Heart left ventricle (tissue), 16 donors: ENCODE measurements at regions of chr12 and their contacts with region 1.

Region 1: GRCh38 chr12:95351748-95352147 is 122.2 kb upstream of the METAP2 start:
- DNase-seq: peak in 4 of 5 donors; percentile 30 to 56 (median 39)
- ATAC-seq: peak; percentile 81 to 88 (median 87)
- H3K4me3 ChIP-seq: no peak overlapping the region
- H3K27ac ChIP-seq: no peak overlapping the region
- H3K4me1 ChIP-seq: no peaks in the 10 kb centered on the region
- H3K27me3 ChIP-seq: no peaks in the 10 kb centered on the region
- CTCF ChIP-seq: peak in 8 of 12 donors; percentile 12 to 41 (median 29)
- POLR2A ChIP-seq: no peak

Region 2: GRCh38 chr12:95265765-95266164 is 86.0 kb before region 1 on chr12:
- intact Hi-C with region 1: no loop called
- DNase-seq: no peak
- ATAC-seq: no peak
- H3K4me3 ChIP-seq: no peak overlapping the region
- H3K27ac ChIP-seq: peak overlapping the region in 6 of 12 donors; percentile 2 to 42 (median 10)
- H3K4me1 ChIP-seq: peaks cover 0 to 37% (median 13%) of the 10 kb centered on the region in 12 donors
- H3K27me3 ChIP-seq: no peaks in the 10 kb centered on the region
- CTCF ChIP-seq: no peak
- POLR2A ChIP-seq: no peak

Region 3: GRCh38 chr12:95473884-95474659 is 122.3 kb after region 1 on chr12 and contains the start of gene METAP2:
- intact Hi-C with region 1: no loop called
- DNase-seq: peak; percentile 96 to 98 (median 98)
- ATAC-seq: peak; percentile 100
- H3K4me3 ChIP-seq: peak within 1 kb of the TSS; percentile 48 to 98 (median 92)
- H3K27ac ChIP-seq: peak within 1 kb of the TSS; percentile 85 to 98 (median 94)
- H3K4me1 ChIP-seq: peaks cover 0 to 35% (median 19%) of the 10 kb centered on the region in 12 donors
- H3K27me3 ChIP-seq: no peaks in the 10 kb centered on the region
- CTCF ChIP-seq: no peak
- POLR2A ChIP-seq: peak in 1 of 2 donors; percentile 67
- total RNA-seq, gene METAP2: 50.9 to 69.8 (median 55.5) TPM

Region 4: GRCh38 chr12:95538656-95539055 is 186.9 kb after region 1 on chr12:
- intact Hi-C with region 1: loop called in 8 of 10 experiments (anchors 2 to 10 kb)
- DNase-seq: no peak
- ATAC-seq: no peak
- H3K4me3 ChIP-seq: no peak overlapping the region
- H3K27ac ChIP-seq: no peak overlapping the region
- H3K4me1 ChIP-seq: peaks cover 0 to 2% (median 0%) of the 10 kb centered on the region in 12 donors
- H3K27me3 ChIP-seq: no peaks in the 10 kb centered on the region
- CTCF ChIP-seq: no peak
- POLR2A ChIP-seq: no peak